ENCODE measurements at regions of chr6 and their contacts with region 1.

Region 1: GRCh38 chr6:130810307-130811030 is 16.7 kb upstream of the SMLR1 start:
- DNase-seq: no peak
- H3K4me3 ChIP-seq: no peak overlapping the region
- H3K27ac ChIP-seq: no peak overlapping the region
- H3K4me1 ChIP-seq: no peaks in the 10 kb centered on the region
- H3K27me3 ChIP-seq: no peaks in the 10 kb centered on the region
- CTCF ChIP-seq: no peak

Region 2: GRCh38 chr6:130055271-130055670 is 755.2 kb before region 1 on chr6:
- CTCF ChIA-PET with region 1: no interaction called
- POLR2A ChIA-PET with region 1: interaction called, 46 read pairs
- intact Hi-C with region 1: no loop called
- DNase-seq: no peak
- H3K4me3 ChIP-seq: no peak overlapping the region
- H3K27ac ChIP-seq: no peak overlapping the region
- H3K4me1 ChIP-seq: no peaks in the 10 kb centered on the region
- H3K27me3 ChIP-seq: no peaks in the 10 kb centered on the region
- CTCF ChIP-seq: no peak

Region 3: GRCh38 chr6:130843575-130844320 is 33.3 kb after region 1 on chr6:
- CTCF ChIA-PET with region 1: no interaction called
- POLR2A ChIA-PET with region 1: no interaction called
- intact Hi-C with region 1: no loop called
- DNase-seq: no peak
- H3K4me3 ChIP-seq: no peak overlapping the region
- H3K27ac ChIP-seq: no peak overlapping the region
- H3K4me1 ChIP-seq: no peaks in the 10 kb centered on the region
- H3K27me3 ChIP-seq: no peaks in the 10 kb centered on the region
- CTCF ChIP-seq: peak; percentile 82

Region 4: DNA sequence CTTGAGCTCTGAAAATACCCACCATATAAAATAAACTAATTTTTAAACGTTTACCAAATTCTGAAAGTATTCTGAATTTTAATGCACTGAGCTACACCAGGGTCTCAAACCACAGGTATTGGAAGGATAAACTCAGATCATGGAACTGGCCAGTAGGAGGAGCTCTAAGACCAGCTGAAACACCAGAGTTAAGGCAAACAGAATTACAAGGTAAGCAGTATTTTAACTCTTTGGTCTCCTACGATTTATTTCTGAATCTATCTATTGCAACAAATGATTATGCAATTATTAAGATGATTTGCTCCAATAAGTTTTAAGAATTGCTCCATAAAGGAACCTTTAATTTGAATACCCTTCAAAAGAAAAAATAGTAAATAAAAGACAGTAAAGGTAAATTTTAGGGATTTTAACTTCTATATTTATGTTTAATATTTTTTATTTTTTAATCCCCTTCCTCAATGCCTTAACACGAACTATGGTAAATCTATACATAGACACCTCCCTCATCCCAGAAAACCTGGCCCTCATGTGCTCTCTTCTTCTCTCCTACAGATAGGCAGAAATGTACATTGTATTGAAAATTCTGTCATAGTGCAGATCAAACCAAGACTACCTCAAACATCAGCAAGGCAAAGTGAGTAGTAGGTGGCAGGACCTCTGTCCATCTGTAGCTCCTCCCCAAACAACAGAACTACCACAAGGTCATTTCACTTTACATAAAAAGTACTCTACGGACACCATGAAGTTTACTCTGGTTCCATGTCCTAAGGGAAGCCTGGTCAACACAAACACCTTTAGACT is 75.1 kb after region 1 on chr6:
- CTCF ChIA-PET with region 1: no interaction called
- POLR2A ChIA-PET with region 1: no interaction called
- intact Hi-C with region 1: no loop called
- DNase-seq: peak; percentile 61 to 67
- H3K4me3 ChIP-seq: no peak overlapping the region
- H3K27ac ChIP-seq: no peak overlapping the region
- H3K4me1 ChIP-seq: no peaks in the 10 kb centered on the region
- H3K27me3 ChIP-seq: no peaks in the 10 kb centered on the region
- CTCF ChIP-seq: peak; percentile 98